ENCODE measurements at regions of chr18 and their contacts with region 1.

Region 1: DNA sequence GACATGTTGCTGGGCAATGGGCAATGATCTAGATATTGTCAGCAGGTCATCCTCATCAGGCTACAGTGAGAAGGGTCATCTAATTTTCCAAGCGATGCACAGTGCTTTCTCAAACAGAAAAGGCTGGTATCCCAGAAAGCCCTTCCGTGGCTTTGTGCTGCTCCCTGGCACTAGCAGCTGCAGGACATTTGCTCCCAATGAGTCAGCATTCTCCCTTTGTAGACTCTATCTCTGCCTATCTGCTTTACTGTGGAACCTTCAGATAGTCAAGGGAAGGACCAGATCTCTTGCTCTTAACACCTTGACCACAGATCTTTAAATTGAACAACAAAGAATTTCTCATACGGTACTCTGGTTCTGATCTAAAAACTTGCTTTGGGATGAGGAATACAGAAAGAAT is 101.4 kb downstream of the CDH2 start:
- DNase-seq: no peak
- H3K4me3 ChIP-seq: no peak overlapping the region
- H3K4me3 Mint-ChIP-seq: no peak overlapping the region
- H3K27ac Mint-ChIP-seq: no peak overlapping the region
- H3K4me1 ChIP-seq: peaks cover 9% of the 10 kb centered on the region; the same call in 1 of the 2 replicates
- H3K4me1 Mint-ChIP-seq: peaks cover 11% of the 10 kb centered on the region
- H3K27me3 ChIP-seq: no peaks in the 10 kb centered on the region
- H3K27me3 Mint-ChIP-seq: no peaks in the 10 kb centered on the region
- CTCF ChIP-seq: no peak

Region 2: GRCh38 chr18:27845897-27846296 is 229.6 kb before region 1 on chr18:
- CTCF ChIA-PET with region 1: no interaction called
- POLR2A ChIA-PET with region 1: no interaction called
- intact Hi-C with region 1: loop called (anchors 1 kb)
- DNase-seq: no peak
- H3K4me3 ChIP-seq: no peak overlapping the region
- H3K4me3 Mint-ChIP-seq: no peak overlapping the region
- H3K27ac Mint-ChIP-seq: no peak overlapping the region
- H3K4me1 ChIP-seq: peaks cover 12% of the 10 kb centered on the region; the same call in 1 of the 2 replicates
- H3K4me1 Mint-ChIP-seq: peaks cover 14% of the 10 kb centered on the region
- H3K27me3 ChIP-seq: no peaks in the 10 kb centered on the region
- H3K27me3 Mint-ChIP-seq: no peaks in the 10 kb centered on the region
- CTCF ChIP-seq: no peak

Region 3: GRCh38 chr18:27901424-27902226 is 173.9 kb before region 1 on chr18:
- CTCF ChIA-PET with region 1: no interaction called
- POLR2A ChIA-PET with region 1: no interaction called
- intact Hi-C with region 1: loop called (anchors 1 kb)
- DNase-seq: peak in 1 of 2 experiments; percentile 52
- H3K4me3 ChIP-seq: no peak overlapping the region
- H3K4me3 Mint-ChIP-seq: no peak overlapping the region
- H3K27ac Mint-ChIP-seq: no peak overlapping the region
- H3K4me1 ChIP-seq: peaks cover 17% of the 10 kb centered on the region
- H3K4me1 Mint-ChIP-seq: peaks cover 18% of the 10 kb centered on the region
- H3K27me3 ChIP-seq: no peaks in the 10 kb centered on the region
- H3K27me3 Mint-ChIP-seq: no peaks in the 10 kb centered on the region
- CTCF ChIP-seq: no peak

Region 4: DNA sequence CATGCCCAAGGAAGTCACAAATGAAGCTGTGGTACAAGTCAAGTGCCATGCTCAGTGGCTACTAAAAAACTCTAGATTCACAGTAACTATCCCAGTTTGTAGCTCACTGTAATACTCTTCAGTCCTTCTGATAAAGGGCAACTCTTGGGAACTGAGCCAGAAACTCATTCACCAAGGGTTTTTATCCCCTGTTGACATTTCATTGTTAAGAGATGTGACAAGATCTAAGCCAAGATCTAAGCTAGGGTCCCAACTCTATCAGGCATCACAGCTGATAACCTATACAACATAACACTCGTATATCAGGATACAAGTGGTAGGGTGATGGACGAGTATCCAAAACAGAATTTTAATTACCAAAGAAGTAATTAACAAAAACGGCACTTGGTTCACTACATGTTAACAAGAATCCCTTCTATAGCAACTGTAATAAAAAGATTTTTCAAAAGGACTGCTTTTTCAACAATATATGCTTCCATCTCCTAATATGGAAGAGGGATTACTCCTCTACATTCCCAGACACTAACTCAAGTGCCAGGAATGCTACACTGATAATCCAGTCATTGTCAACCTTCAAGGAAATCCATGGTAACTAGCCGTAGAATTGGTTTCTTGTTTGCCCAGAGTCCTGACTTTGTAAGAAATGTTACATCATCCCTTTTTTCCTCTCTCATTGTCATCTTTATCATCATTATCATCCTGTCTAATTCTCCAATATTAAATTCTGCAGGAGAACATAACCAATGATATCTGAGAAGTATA is 10.3 kb before region 1 on chr18:
- CTCF ChIA-PET with region 1: no interaction called
- POLR2A ChIA-PET with region 1: no interaction called
- intact Hi-C with region 1: loop called (anchors 1 kb)
- DNase-seq: peak in 1 of 2 experiments; percentile 28
- H3K4me3 ChIP-seq: no peak overlapping the region
- H3K4me3 Mint-ChIP-seq: peak overlapping the region; percentile 33
- H3K27ac Mint-ChIP-seq: peak overlapping the region; percentile 85
- H3K4me1 ChIP-seq: peaks cover 11% of the 10 kb centered on the region
- H3K4me1 Mint-ChIP-seq: peaks cover 7% of the 10 kb centered on the region
- H3K27me3 ChIP-seq: no peaks in the 10 kb centered on the region
- H3K27me3 Mint-ChIP-seq: no peaks in the 10 kb centered on the region
- CTCF ChIP-seq: no peak

Region 5: GRCh38 chr18:28095041-28095440 is 19.5 kb after region 1 on chr18:
- CTCF ChIA-PET with region 1: no interaction called
- POLR2A ChIA-PET with region 1: no interaction called
- intact Hi-C with region 1: no loop called
- DNase-seq: no peak
- H3K4me3 ChIP-seq: no peak overlapping the region
- H3K4me3 Mint-ChIP-seq: no peak overlapping the region
- H3K27ac Mint-ChIP-seq: no peak overlapping the region
- H3K4me1 ChIP-seq: peaks cover 6% of the 10 kb centered on the region; the same call in 1 of the 2 replicates
- H3K4me1 Mint-ChIP-seq: peaks cover 13% of the 10 kb centered on the region
- H3K27me3 ChIP-seq: no peaks in the 10 kb centered on the region
- H3K27me3 Mint-ChIP-seq: no peaks in the 10 kb centered on the region
- CTCF ChIP-seq: no peak

Region 6: GRCh38 chr18:28127763-28128663 is 52.5 kb after region 1 on chr18:
- CTCF ChIA-PET with region 1: no interaction called
- POLR2A ChIA-PET with region 1: no interaction called
- intact Hi-C with region 1: loop called (anchors 2 kb)
- DNase-seq: peak; percentile 30 to 35
- H3K4me3 ChIP-seq: no peak overlapping the region
- H3K4me3 Mint-ChIP-seq: no peak overlapping the region
- H3K27ac Mint-ChIP-seq: no peak overlapping the region
- H3K4me1 ChIP-seq: peaks cover 19% of the 10 kb centered on the region
- H3K4me1 Mint-ChIP-seq: peaks cover 6% of the 10 kb centered on the region
- H3K27me3 ChIP-seq: no peaks in the 10 kb centered on the region
- H3K27me3 Mint-ChIP-seq: no peaks in the 10 kb centered on the region
- CTCF ChIP-seq: no peak

Region 7: GRCh38 chr18:28161608-28162599 is 86.4 kb after region 1 on chr18:
- CTCF ChIA-PET with region 1: no interaction called
- POLR2A ChIA-PET with region 1: no interaction called
- intact Hi-C with region 1: loop called (anchors 5 kb)
- DNase-seq: peak; percentile 10 to 37
- H3K4me3 ChIP-seq: no peak overlapping the region
- H3K4me3 Mint-ChIP-seq: peak overlapping the region; percentile 24
- H3K27ac Mint-ChIP-seq: peak overlapping the region; percentile 61
- H3K4me1 ChIP-seq: peaks cover 22% of the 10 kb centered on the region
- H3K4me1 Mint-ChIP-seq: peaks cover 6% of the 10 kb centered on the region
- H3K27me3 ChIP-seq: no peaks in the 10 kb centered on the region
- H3K27me3 Mint-ChIP-seq: no peaks in the 10 kb centered on the region
- CTCF ChIP-seq: no peak